Activated CD4-positive, alpha-beta memory T cell treated with anti-CD3 and anti-CD28 coated beads for 36 hours (primary cell): ENCODE measurements at regions of chr12 and their contacts with region 1.

Region 1: GRCh38 chr12:117587631-117588287 is 226.3 kb upstream of the NOS1 start:
- DNase-seq: peak; percentile 58
- H3K4me3 Mint-ChIP-seq: no peak overlapping the region
- H3K27ac Mint-ChIP-seq: no peak overlapping the region
- H3K4me1 Mint-ChIP-seq: no peaks in the 10 kb centered on the region
- H3K27me3 Mint-ChIP-seq: no peaks in the 10 kb centered on the region

Region 2: GRCh38 chr12:117212563-117213190 is 375.1 kb before region 1 on chr12:
- CTCF ChIA-PET with region 1: interaction called, 18 read pairs
- POLR2A ChIA-PET with region 1: no interaction called
- intact Hi-C with region 1: loop called (anchors 1 kb)
- DNase-seq: peak; percentile 75
- H3K4me3 Mint-ChIP-seq: no peak overlapping the region
- H3K27ac Mint-ChIP-seq: no peak overlapping the region
- H3K4me1 Mint-ChIP-seq: no peaks in the 10 kb centered on the region
- H3K27me3 Mint-ChIP-seq: peaks cover 7% of the 10 kb centered on the region

Region 3: DNA sequence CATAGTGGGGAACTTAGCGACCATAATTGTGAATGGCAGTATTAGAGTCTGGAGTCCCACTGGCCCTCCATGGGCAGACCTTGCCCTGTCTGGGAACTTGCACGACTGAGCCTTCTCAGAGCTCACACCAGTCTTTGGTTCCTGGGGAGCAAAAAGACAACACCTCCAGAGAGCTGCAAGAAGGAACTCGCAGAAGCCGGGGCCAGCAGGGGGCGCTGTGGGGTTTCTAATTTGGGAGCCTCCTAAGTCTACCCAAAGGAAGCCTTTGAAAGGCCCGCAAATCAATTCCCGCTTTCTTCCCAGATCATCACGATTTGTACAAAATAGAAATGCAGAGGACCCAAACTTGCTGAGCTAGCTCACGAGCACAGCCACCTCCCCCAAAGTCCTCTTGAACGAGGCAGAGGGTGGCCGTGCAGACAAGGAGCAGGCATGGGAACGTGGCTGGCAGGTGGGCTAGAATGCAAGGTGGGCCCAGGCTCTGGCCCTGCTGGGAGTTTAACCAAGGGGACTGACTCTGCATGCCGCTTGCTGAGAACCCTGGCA is 351.2 kb before region 1 on chr12:
- CTCF ChIA-PET with region 1: interaction called, 8 read pairs
- POLR2A ChIA-PET with region 1: no interaction called
- intact Hi-C with region 1: loop called (anchors 1 kb)
- DNase-seq: peak; percentile 86
- H3K4me3 Mint-ChIP-seq: no peak overlapping the region
- H3K27ac Mint-ChIP-seq: no peak overlapping the region
- H3K4me1 Mint-ChIP-seq: no peaks in the 10 kb centered on the region
- H3K27me3 Mint-ChIP-seq: peaks cover 9% of the 10 kb centered on the region